ENCODE measurements at regions of chr3 and their contacts with region 1.

Region 1: GRCh38 chr3:13884851-13885703 is 5.2 kb upstream of the WNT7A start:
- DNase-seq: peak; percentile 72
- H3K4me3 Mint-ChIP-seq: no peak overlapping the region
- H3K27ac Mint-ChIP-seq: no peak overlapping the region
- H3K4me1 Mint-ChIP-seq: peaks cover 6% of the 10 kb centered on the region
- H3K27me3 Mint-ChIP-seq: peaks cover 46% of the 10 kb centered on the region

Region 2: DNA sequence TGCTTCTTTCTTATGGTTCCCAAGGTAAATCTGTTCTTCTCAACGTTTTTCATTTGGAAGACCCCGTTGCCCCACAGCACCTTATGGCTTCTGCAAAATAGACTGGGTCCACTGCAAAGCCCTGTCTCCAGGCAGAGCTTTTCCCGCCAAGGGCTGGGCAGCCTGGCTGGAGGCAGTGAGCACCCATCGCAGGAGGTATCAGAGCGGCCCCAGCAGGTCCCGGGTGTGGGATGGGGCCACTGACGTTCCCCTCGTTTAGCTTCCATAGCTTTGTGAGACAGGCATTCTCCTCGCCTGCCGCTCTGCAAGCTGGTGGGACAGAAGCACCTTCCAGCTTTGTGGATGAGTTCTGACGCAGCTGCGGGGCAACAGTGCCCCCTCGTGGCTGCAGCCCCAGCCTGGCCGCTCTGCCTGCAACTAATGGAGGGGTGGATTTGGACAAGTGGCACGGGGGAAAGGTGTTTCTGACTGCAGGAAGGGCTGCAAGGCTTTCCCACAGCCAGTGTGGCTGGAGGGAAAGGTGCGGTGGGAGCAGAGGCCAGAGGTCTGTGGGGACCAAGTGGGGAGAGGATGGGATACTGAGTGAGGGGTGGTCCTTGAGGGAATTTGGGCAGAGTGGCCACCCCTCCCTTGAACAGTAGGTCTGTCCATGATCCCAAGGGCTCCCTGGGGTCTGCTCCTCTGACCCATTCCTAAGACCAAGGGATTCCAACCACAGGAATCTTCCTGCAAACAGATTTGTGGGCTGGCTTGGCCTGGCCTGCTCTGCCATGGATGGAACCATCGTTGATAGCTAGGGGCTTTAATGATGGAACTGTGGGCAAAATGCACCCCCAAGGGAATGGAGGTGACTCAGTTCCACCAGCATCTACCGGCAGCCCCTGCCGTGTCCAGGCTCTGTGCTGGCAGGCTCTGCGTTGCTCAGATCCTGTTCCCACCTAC is 236.7 kb before region 1 on chr3:
- CTCF ChIA-PET with region 1: interaction called, 327 read pairs
- POLR2A ChIA-PET with region 1: interaction called, 3 read pairs
- DNase-seq: peak; percentile 78
- H3K4me3 Mint-ChIP-seq: peak overlapping the region; percentile 33
- H3K27ac Mint-ChIP-seq: peak overlapping the region; percentile 66
- H3K4me1 Mint-ChIP-seq: peaks cover 52% of the 10 kb centered on the region
- H3K27me3 Mint-ChIP-seq: peaks cover 29% of the 10 kb centered on the region

Region 3: DNA sequence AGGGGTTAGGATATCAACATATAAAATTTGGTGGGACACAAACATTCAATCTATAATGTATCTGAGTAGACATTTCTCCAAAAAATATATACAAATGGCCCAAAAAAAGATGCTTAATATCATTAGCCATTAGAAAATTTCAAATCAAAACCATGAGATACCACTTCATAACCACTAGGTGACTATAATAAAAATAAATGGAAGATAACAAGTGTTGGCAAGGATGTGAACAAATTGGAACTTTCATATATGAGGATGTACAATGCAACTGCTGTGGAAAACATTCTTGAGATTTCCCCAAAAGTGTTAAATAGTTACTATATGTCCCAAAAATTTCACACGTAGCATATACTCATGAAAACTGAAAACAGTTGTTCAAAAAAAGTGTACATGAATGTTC is 31.3 kb after region 1 on chr3:
- CTCF ChIA-PET with region 1: no interaction called
- POLR2A ChIA-PET with region 1: no interaction called
- DNase-seq: no peak
- H3K4me3 Mint-ChIP-seq: no peak overlapping the region
- H3K27ac Mint-ChIP-seq: no peak overlapping the region
- H3K4me1 Mint-ChIP-seq: no peaks in the 10 kb centered on the region
- H3K27me3 Mint-ChIP-seq: peaks cover 3% of the 10 kb centered on the region

Region 4: GRCh38 chr3:13963140-13963898 is 78.2 kb after region 1 on chr3:
- CTCF ChIA-PET with region 1: no interaction called
- POLR2A ChIA-PET with region 1: no interaction called
- DNase-seq: no peak
- H3K4me3 Mint-ChIP-seq: no peak overlapping the region
- H3K27ac Mint-ChIP-seq: no peak overlapping the region
- H3K4me1 Mint-ChIP-seq: peaks cover 4% of the 10 kb centered on the region
- H3K27me3 Mint-ChIP-seq: peaks cover 9% of the 10 kb centered on the region

Measured in activated CD4-positive, alpha-beta memory T cell treated with anti-CD3 and anti-CD28 coated beads, Interleukin-2, amount 10 ng/mL, durations not matched to agents 7 days and 5 days (primary cell).